ENCODE measurements at regions of chr2 and their contacts with region 1.

Region 1: GRCh38 chr2:186496401-186496800 is 10.3 kb downstream of the ZC3H15 start:
- DNase-seq: peak; percentile 78
- ATAC-seq: peak; percentile 91
- H3K4me3 ChIP-seq: no peak overlapping the region
- H3K27ac ChIP-seq: 0 out of 2 replicates have a peak overlapping the region, but pooled peaks have one; percentile 40
- H3K4me1 ChIP-seq: peaks cover 18% of the 10 kb centered on the region; the same call in 1 of the 2 replicates
- H3K27me3 ChIP-seq: no peaks in the 10 kb centered on the region
- CTCF ChIP-seq: no peak

Region 2: GRCh38 chr2:186771850-186772611 is 275.6 kb after region 1 on chr2:
- CTCF ChIA-PET with region 1: no interaction called
- POLR2A ChIA-PET with region 1: no interaction called
- in situ Hi-C with region 1: no loop called
- intact Hi-C with region 1: loop called (anchors 10 kb)
- DNase-seq: no peak
- ATAC-seq: peak; percentile 93
- H3K4me3 ChIP-seq: peak overlapping the region in 1 of 2 experiments; percentile 25; a peak in 2 of 4 replicates
- H3K27ac ChIP-seq: peak overlapping the region; percentile 53
- H3K4me1 ChIP-seq: 0 out of 2 replicates have a peak, but pooled peaks cover 7% of the 10 kb centered on the region
- H3K27me3 ChIP-seq: no peaks in the 10 kb centered on the region
- CTCF ChIP-seq: no peak

Region 3: DNA sequence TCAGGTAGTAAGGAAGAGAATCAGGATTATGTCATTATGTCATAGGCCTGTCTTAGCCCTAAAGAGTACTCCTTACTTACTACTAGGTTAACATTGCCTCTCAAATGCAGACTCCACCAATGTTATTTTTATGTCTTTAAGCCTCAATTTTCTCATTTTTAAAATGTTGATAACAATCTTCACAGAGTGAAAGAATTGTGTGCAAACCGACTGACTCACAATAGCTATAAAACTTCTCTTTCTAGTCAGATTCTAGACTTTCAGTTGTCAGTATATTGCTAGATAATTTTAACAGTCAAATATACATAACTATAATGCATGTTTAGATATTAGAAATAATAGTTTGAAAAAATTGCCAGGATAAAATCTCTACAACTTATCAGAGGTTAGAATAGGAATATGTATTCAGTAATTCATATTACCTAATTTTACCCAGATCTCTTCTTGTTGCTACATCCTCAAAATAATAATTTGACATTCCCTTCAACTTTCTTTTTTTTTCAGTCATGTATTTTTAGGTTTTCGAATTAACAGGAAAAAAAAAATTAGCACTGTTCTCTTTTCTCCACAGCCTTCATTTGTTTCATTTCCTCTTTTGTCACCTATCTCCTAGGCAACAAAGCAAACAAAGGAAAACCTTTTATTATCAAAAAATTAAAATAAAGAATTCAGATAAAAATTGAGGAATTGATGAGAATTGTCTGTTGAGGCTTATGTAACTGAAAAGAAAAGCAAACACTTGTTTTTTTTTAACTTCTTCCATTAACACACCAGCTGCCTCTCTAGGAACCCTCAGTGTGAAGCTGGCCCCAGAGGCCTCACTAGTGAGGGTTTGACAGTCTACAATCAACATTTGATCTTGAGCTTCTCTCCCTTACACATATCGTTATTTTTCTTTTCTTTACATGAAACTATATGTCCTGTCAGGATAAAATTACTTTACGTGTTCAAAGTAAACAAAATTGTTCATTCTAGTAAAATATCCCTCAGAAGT is 672.6 kb after region 1 on chr2:
- CTCF ChIA-PET with region 1: no interaction called
- POLR2A ChIA-PET with region 1: no interaction called
- in situ Hi-C with region 1: no loop called
- intact Hi-C with region 1: no loop called
- DNase-seq: no peak
- ATAC-seq: no peak
- H3K4me3 ChIP-seq: no peak overlapping the region
- H3K27ac ChIP-seq: no peak overlapping the region
- H3K4me1 ChIP-seq: no peaks in the 10 kb centered on the region
- H3K27me3 ChIP-seq: no peaks in the 10 kb centered on the region
- CTCF ChIP-seq: no peak

Measured in Panc1 (cell line).